ENCODE measurements at regions of chr12 and their contacts with region 1.

Region 1: DNA sequence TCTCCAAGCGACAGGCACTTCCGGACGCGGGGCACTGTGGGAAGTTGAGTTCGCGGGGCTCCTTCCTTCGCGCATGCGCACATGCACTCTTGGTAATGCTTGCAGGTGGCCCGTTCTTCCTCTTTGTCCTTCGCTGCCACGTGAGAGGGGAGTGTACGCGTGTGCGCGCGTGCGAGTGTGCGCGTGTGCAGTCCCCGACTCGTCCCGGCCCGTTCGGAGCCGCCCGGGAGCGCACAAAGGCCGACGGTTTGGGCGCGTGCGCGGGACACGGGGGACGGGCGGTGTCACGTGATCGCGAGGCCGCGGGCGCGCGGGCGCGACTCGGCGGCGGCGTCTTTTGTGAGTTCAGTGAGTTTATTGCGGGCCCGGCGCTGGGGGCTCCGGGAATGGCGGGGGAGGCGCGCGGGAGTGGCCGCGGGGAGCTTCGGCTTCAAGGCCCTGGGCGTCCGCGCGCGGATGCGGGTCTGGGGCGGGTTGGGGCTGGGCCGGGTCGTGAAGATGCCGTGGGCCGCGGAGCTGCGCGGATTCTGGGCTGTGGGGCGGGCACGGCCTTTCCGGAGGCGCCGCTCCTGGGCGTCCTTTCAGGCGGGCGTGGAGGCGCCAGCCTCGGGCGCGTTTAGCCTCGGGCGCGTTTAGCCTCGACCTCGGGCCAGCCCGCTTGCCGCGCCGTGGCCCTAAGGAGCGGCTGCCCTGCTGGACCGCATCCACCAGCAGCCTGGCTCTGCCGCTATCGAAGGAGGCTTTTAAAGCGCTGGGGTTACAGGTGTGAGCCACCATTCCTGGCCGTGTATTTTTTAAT is at the start of gene ZNF84:
- DNase-seq: peak; percentile 96
- ATAC-seq: peak; percentile 98
- H3K4me3 ChIP-seq: peak within 1 kb of the TSS; percentile 77
- H3K27ac ChIP-seq: peak within 1 kb of the TSS; percentile 79
- H3K4me1 ChIP-seq: no peaks in the 10 kb centered on the region
- H3K27me3 ChIP-seq: no peaks in the 10 kb centered on the region
- CTCF ChIP-seq: no peak
- EP300 ChIP-seq: no peak
- POLR2A ChIP-seq: peak; percentile 82
- RAD21 ChIP-seq: no peak
- polyA plus RNA-seq, gene ZNF84: 10.4 to 11.9 TPM

Region 2: DNA sequence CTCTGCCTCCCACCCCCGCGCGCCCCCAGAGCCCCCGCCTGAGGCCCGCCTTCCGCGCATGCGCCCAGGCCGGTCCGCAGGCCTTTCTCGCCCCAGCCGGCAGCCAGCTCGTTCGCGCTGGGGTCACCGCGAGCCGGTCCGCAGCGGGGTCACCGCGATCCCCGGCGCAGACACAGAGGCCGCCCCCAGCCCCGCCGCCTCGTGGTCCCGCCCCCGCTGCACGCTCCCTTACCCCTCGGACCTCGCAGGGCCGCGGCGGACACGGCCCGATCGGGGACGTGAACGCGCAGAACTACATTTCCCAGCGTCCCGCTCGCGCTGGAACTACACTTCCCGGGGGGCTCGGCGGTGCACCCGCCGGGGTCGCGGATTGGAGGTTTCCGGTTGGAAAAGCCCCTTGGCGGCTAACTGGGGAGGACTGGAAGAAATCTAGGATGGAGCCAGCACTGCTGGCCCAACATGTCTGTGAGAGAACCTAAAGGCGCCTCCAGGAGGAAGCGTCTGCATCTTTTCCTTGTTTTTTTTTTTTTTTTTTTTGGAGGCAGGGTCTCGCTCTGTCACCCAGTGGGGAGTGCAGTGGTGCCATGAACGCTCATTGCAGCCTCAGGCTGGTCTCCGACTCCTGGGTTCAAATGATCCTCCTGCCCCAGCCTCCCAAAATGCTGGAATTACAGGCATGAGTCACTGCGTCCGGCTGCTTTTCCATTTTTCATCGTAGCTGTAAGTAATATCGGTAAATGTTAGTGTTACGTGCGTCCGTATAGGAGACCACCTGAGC is 81.2 kb before region 1 on chr12 and contains the start of gene ZNF605:
- CTCF ChIA-PET with region 1: no interaction called
- POLR2A ChIA-PET with region 1: no interaction called
- RAD21 ChIA-PET with region 1: no interaction called
- SMC1A ChIA-PET with region 1: no interaction called
- in situ Hi-C with region 1: no loop called
- intact Hi-C with region 1: loop called (anchors 1 kb)
- DNase-seq: peak; percentile 37
- ATAC-seq: peak; percentile 97
- H3K4me3 ChIP-seq: peak within 1 kb of the TSS; percentile 86
- H3K27ac ChIP-seq: peak within 1 kb of the TSS; percentile 76
- H3K4me1 ChIP-seq: no peaks in the 10 kb centered on the region; the same call in 1 of the 2 replicates
- H3K27me3 ChIP-seq: no peaks in the 10 kb centered on the region
- CTCF ChIP-seq: no peak
- EP300 ChIP-seq: no peak
- POLR2A ChIP-seq: peak; percentile 75
- RAD21 ChIP-seq: no peak
- polyA plus RNA-seq, gene ZNF605: 0.95 to 1.3 TPM

Region 3: GRCh38 chr12:132986001-132986912 is 51.1 kb before region 1 on chr12 and contains the start of gene ZNF26:
- CTCF ChIA-PET with region 1: no interaction called
- POLR2A ChIA-PET with region 1: interaction called, 8 read pairs
- RAD21 ChIA-PET with region 1: interaction called, 4 read pairs
- SMC1A ChIA-PET with region 1: interaction called, 8 read pairs
- in situ Hi-C with region 1: no loop called
- intact Hi-C with region 1: loop called (anchors 2 kb)
- DNase-seq: peak; percentile 72
- ATAC-seq: peak; percentile 99
- H3K4me3 ChIP-seq: peak within 1 kb of the TSS; percentile 83
- H3K27ac ChIP-seq: peak within 1 kb of the TSS; percentile 82
- H3K4me1 ChIP-seq: peaks cover 4% of the 10 kb centered on the region; the same call in 1 of the 2 replicates
- H3K27me3 ChIP-seq: no peaks in the 10 kb centered on the region
- CTCF ChIP-seq: no peak
- EP300 ChIP-seq: peak in 1 of 2 experiments; percentile 18; a peak in 1 of 4 replicates
- POLR2A ChIP-seq: peak; percentile 95
- RAD21 ChIP-seq: no peak
- polyA plus RNA-seq, gene ZNF26: 1.00 to 1.4 TPM

Region 4: GRCh38 chr12:133181238-133181959 is 144.0 kb after region 1 on chr12 and contains the start of gene ZNF268:
- CTCF ChIA-PET with region 1: no interaction called
- POLR2A ChIA-PET with region 1: no interaction called
- RAD21 ChIA-PET with region 1: interaction called, 4 read pairs
- SMC1A ChIA-PET with region 1: interaction called, 3 read pairs
- in situ Hi-C with region 1: no loop called
- intact Hi-C with region 1: loop called (anchors 1 kb)
- DNase-seq: peak; percentile 61
- ATAC-seq: peak; percentile 98
- H3K4me3 ChIP-seq: peak within 1 kb of the TSS; percentile 88
- H3K27ac ChIP-seq: peak within 1 kb of the TSS; percentile 80
- H3K4me1 ChIP-seq: no peaks in the 10 kb centered on the region
- H3K27me3 ChIP-seq: no peaks in the 10 kb centered on the region
- CTCF ChIP-seq: peak; percentile 74 to 96 (median 75)
- EP300 ChIP-seq: no peak
- POLR2A ChIP-seq: peak; percentile 89
- RAD21 ChIP-seq: peak; percentile 56; the same call in 1 of the 2 replicates
- polyA plus RNA-seq, gene ZNF268: 9.4 to 11.4 TPM

Measured in GM12878 (cell line).